HEK293 (cell line): ENCODE measurements at regions of chr12 and their contacts with region 1.

Region 1: DNA sequence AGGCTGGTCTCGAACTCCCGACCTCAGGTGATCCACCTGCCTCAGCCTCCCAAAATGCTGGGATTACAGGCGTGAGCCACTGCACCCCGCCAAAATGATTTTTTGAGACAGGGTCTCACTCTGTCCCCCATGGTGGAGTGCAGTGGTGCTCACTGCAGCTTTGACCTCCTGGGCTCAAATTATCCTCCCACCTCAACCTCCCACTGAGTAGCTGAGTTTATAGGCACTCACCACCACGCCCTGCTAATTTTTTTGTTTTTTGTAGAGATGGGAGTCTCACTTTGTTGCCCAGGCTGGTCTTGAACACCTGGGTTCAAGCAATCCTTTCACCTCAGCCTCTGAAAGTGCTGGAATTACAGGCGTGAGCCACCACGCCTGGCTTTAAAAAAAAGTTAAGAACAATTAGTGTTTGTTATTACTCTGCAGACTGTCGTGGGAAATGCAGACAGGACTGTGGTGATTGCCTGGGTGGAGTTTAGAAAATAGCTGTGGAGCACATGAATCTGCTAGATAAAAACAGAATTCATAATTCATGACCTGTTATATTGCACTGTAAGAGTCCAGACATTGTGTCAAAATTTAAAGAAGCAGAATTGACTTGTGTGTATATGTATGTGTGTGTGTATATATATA is 9.2 kb upstream of the COX6A1 start:
- H3K4me3 ChIP-seq: no peak overlapping the region
- H3K27ac ChIP-seq: no peak overlapping the region
- H3K4me1 ChIP-seq: no peaks in the 10 kb centered on the region
- CTCF ChIP-seq: no peak

Region 2: GRCh38 chr12:120337730-120338129 is 91.0 kb before region 1 on chr12:
- CTCF ChIA-PET with region 1: interaction called, 17 read pairs
- POLR2A ChIA-PET with region 1: no interaction called
- H3K4me3 ChIP-seq: no peak overlapping the region
- H3K27ac ChIP-seq: no peak overlapping the region
- H3K4me1 ChIP-seq: no peaks in the 10 kb centered on the region
- CTCF ChIP-seq: no peak

Region 3: DNA sequence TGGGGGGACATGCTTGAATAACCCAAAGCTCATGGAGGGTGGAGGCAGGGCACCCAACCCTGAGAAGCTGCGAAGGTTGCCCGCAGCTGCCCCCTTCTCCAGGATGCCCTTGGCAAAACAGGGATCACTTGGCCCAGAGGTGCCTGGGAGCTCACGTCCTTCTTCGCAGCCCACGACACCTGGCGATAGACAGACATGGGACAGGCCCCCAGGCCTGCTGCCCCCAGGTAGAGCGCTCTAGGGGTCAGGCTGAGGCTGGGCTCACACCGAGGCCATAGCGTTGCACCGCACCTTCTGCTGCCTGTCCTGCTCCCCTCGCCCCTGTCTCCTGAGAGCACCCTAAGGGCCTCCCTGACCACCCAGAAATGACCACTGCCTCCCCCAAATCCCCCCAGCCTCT is 80.9 kb before region 1 on chr12:
- CTCF ChIA-PET with region 1: interaction called, 10 read pairs
- POLR2A ChIA-PET with region 1: interaction called, 4 read pairs
- H3K4me3 ChIP-seq: no peak overlapping the region
- H3K27ac ChIP-seq: no peak overlapping the region
- H3K4me1 ChIP-seq: no peaks in the 10 kb centered on the region
- CTCF ChIP-seq: no peak

Region 4: DNA sequence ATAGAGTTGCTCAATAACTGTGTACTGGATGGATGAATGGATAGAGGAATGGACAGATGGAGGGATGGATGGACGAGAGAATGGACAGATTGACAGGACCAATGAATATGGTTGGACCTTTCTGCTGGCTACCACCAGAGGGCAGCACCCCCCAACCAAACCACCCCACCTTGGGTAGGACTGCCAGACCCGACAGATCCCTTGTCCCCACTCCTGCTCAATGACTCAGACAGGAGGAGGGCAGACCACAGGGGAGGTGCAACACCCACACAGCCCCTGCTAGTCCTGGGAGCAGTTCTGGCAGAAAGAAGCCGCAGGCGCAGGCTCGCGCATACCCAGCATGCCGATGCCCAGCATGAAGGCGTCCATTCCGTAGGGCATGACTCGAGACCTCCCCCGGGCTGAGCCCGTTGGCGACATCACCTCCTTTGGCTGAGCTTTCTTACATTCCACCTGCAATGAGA is 72.1 kb before region 1 on chr12:
- CTCF ChIA-PET with region 1: interaction called, 39 read pairs
- POLR2A ChIA-PET with region 1: no interaction called
- H3K4me3 ChIP-seq: no peak overlapping the region
- H3K27ac ChIP-seq: no peak overlapping the region
- H3K4me1 ChIP-seq: no peaks in the 10 kb centered on the region
- CTCF ChIP-seq: peak; percentile 86

Region 5: GRCh38 chr12:120367233-120367923 is 61.3 kb before region 1 on chr12:
- CTCF ChIA-PET with region 1: interaction called, 13 read pairs
- POLR2A ChIA-PET with region 1: interaction called, 3 read pairs
- H3K4me3 ChIP-seq: peak overlapping the region; percentile 61
- H3K27ac ChIP-seq: peak overlapping the region; percentile 38; the same call in 1 of the 2 replicates
- H3K4me1 ChIP-seq: 0 out of 2 replicates have a peak, but pooled peaks cover 2% of the 10 kb centered on the region
- CTCF ChIP-seq: peak; percentile 74